A549 (cell line): ENCODE measurements at regions of chr5 and their contacts with region 1.

Region 1: DNA sequence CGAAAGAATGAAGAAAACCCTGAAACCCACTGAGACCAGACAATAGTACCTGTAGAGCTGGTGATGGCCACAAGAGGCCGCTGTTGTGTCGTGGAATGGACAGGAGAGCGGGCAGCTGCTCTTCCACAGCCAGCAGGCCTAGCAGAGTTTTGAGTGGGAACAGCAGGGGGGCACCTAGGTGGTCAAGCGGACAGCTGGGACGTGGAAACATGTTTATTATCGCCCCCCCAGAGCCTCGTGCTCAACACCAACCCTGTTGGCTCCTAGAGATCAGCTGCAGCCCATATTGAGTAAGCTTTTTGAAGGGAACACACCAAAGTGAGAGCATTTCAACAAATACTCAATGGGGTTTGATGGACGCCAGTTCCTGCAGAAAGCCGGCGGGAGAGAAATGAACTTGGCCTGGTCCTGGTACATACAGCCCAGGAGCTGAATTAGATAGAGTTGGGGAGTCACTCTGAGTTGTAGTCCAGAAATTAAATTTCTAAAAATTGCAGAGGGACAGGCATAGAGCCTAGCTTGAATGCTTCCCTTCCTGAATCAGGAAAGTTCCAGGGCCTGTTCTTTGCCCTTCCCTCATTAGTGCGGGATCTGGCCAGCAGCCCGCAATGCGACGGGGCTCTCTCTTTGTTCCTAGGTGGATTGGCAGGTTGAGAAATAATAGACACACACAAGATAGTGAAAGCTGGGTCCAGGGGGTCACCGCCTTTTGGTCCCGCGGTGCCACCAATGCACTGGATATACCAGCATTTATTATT is 33.8 kb downstream of the MFAP3 start:
- DNase-seq: peak; percentile 64 to 84
- ATAC-seq: peak; percentile 98 to 99
- H3K4me3 ChIP-seq: no peak overlapping the region
- H3K27ac ChIP-seq: peak overlapping the region in 1 of 2 experiments; percentile 57; a peak in 3 of 6 replicates
- H3K4me1 ChIP-seq: no peaks in the 10 kb centered on the region
- CTCF ChIP-seq: peak; percentile 97
- EP300 ChIP-seq: no peak
- POLR2A ChIP-seq: no peak
- RAD21 ChIP-seq: peak; percentile 98 to 99

Region 2: GRCh38 chr5:154092356-154093141 is 20.0 kb after region 1 on chr5:
- CTCF ChIA-PET with region 1: interaction called, 16 read pairs
- POLR2A ChIA-PET with region 1: no interaction called
- DNase-seq: peak in 1 of 2 experiments; percentile 30
- ATAC-seq: peak in 1 of 2 experiments; percentile 70; a peak in 4 of 6 replicates
- H3K4me3 ChIP-seq: no peak overlapping the region
- H3K27ac ChIP-seq: no peak overlapping the region
- H3K4me1 ChIP-seq: peaks cover 8% of the 10 kb centered on the region
- CTCF ChIP-seq: no peak
- EP300 ChIP-seq: no peak
- POLR2A ChIP-seq: no peak
- RAD21 ChIP-seq: no peak

Region 3: DNA sequence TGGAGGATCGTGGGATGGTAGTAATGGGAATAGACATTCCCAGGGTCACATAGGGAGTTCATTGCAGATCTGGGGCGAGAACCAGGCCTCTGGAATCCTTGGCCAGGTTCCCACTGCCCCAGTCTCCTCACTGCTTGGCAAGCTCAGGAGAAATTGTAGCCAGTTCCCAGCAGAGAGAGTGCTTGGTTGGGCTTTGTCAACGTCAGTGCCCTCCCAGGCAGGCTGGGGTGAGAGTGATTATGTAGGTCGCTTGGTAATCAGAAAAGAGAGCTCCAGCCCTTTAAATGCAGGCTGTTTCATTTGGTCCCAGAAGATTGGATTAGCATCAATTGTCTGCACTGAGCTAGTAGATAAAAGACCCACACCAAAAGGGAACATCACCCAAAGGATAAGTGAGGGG is 66.1 kb after region 1 on chr5:
- CTCF ChIA-PET with region 1: no interaction called
- POLR2A ChIA-PET with region 1: no interaction called
- DNase-seq: no peak
- ATAC-seq: no peak
- H3K4me3 ChIP-seq: no peak overlapping the region
- H3K27ac ChIP-seq: no peak overlapping the region
- H3K4me1 ChIP-seq: no peaks in the 10 kb centered on the region
- CTCF ChIP-seq: no peak
- EP300 ChIP-seq: no peak
- POLR2A ChIP-seq: no peak
- RAD21 ChIP-seq: no peak

Region 4: DNA sequence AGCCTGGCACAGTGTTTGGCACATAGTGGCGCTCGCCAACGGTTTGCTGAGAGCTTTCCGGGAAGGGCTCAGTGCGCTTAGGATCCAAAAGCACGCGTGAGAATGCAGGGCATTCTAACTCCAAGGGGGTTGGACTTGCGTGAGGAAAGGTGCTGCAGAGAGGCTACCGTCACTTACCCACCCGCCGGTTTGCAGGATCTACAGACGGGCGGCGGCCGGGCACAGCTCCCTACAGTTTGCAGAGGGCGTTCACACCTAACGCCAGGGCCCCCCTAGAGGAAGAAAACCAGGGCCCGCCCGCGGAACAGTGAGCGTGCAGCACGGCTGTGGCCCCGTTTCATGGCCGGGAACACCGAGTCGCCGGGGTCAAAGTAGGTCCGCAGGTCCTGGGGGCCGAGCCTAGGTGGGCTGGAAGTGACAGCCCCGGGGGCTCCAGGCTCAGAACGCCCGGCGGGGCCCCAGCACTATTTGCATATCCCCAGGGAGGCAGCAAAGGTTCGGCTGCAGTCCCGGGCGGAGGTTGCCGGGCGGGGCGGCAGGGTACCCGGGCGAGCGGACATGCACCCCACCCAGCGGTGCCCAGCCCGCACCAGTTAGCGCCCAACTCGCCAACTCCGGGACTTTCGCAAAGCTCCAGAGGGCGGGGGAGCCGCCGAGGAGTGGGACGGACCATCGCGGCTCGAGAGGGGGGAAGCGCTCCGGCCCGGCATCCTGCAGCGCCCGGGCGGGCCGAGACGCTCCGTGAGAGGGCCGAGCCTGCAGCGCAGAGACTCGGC is 117.4 kb after region 1 on chr5:
- CTCF ChIA-PET with region 1: interaction called, 19 read pairs
- POLR2A ChIA-PET with region 1: interaction called, 10 read pairs
- DNase-seq: peak; percentile 83 to 91
- ATAC-seq: peak; percentile 88 to 92
- H3K4me3 ChIP-seq: peak overlapping the region; percentile 65
- H3K27ac ChIP-seq: peak overlapping the region; percentile 96 to 99
- H3K4me1 ChIP-seq: peaks cover 43% of the 10 kb centered on the region
- CTCF ChIP-seq: peak; percentile 44
- EP300 ChIP-seq: no peak
- POLR2A ChIP-seq: peak; percentile 52
- RAD21 ChIP-seq: peak; percentile 31 to 53; a peak in 3 of 5 replicates

Region 5: DNA sequence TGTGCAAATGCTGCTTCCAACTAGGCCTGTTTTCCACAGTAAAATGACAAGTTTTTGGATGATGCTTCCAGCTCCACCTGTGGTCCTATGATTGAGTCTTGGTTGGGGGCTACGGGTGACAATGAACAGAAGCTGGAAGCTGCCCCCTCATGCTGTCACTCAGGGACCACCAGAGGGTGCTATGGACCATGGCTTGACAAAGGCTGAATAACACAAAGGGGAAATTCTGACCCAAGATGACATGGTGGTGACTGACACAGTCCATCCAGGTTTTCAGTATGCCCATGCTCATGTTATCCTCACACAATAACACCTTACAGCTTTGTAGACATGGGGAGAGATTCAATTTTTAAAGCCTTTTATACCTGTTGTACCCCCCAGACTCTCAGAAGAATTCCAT is 349.3 kb after region 1 on chr5:
- CTCF ChIA-PET with region 1: interaction called, 15 read pairs
- POLR2A ChIA-PET with region 1: no interaction called
- DNase-seq: peak in 1 of 2 experiments; percentile 37
- ATAC-seq: peak; percentile 66 to 80; a peak in 5 of 6 replicates
- H3K4me3 ChIP-seq: no peak overlapping the region
- H3K27ac ChIP-seq: no peak overlapping the region
- H3K4me1 ChIP-seq: no peaks in the 10 kb centered on the region
- CTCF ChIP-seq: peak; percentile 51
- EP300 ChIP-seq: no peak
- POLR2A ChIP-seq: no peak
- RAD21 ChIP-seq: peak; percentile 48 to 54

Region 6: DNA sequence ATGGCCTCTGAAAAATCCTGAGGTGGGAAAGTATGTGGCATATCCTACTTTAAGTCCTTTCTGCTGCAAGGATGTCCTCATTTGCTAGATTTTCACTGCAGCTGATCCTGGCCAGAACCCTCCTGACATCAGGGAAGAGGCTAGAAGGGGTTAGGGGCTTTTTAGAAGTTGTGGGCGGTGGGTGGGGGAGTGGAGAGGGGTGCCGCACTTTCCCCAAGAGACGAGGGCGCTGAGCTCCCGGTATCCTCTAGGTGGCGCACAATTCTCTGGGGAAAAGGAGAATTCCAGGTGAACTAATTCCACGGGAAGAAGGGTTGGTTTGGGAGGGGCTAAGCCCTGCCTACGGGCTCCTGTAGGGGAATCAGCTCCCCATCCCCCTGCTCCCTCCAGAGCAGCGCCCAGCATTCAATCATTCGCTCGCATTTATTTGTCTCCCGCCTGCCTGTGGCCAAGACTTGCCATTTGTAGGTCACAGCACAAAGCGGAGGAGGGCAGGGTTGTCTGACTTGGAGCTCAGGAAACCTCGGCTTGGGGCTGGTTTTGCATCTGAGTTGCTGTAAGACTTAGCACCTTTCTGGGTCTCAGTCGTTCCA is 448.4 kb after region 1 on chr5:
- CTCF ChIA-PET with region 1: interaction called, 11 read pairs
- POLR2A ChIA-PET with region 1: no interaction called
- DNase-seq: peak; percentile 43 to 79
- ATAC-seq: peak; percentile 23 to 68; a peak in 3 of 6 replicates
- H3K4me3 ChIP-seq: no peak overlapping the region
- H3K27ac ChIP-seq: no peak overlapping the region
- H3K4me1 ChIP-seq: peaks cover 39% of the 10 kb centered on the region
- CTCF ChIP-seq: peak; percentile 80
- EP300 ChIP-seq: no peak
- POLR2A ChIP-seq: no peak
- RAD21 ChIP-seq: peak; percentile 58 to 63; a peak in 4 of 5 replicates